Activated T-helper 2 cell treated with anti-CD3 and anti-CD28 coated beads, Interferon-gamma antibody, Interleukin-2, Interleukin-4, amounts not matched to agents 10 μg/mL and 5 μg/mL and 100 μg/mL, durations not matched to agents 14 hours and 24 hours and 36 hours (primary cell): ENCODE measurements at regions of chr5 and their contacts with region 1.

Region 1: DNA sequence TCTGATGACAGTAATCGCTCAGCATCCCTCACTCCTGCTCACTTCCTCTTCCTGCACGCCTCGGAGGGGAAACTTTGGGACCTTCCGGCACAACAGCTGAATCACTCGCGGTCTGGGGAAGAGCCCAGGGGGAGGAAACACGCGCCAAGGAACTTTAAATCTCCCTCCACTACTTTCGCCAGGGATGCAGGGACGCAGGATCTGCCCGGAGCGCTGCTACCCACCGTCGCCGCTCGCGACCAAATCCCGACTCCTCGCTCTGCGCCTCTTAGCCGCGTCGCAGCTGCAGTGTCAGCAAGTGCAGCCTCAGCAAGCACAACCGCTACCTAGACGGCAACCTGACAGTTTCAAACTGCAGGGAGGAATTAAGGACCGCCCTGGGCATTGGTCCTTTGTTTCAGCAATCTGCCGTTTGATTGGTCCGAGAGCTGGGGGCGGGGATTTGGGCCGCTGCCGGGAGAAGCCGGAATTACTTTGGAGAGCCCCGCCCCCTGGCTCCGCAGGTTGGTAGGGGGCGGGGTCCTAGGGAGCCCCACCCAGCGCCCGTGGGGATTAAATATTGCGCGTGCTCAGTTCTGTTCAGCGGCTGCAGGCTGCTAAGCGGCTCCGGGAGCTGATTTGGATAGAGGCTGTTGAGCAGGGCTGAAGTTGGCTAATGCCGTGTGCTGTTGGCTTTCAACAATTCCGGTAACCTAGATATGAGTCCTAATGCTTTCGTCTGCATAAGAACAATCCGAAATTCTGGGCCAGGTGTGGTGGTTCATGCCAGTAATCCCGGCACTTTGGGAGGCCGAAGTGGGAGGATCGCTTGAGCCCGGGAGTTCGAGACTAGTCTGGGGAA is at the start of gene POC5:
- DNase-seq: peak; percentile 97
- H3K4me3 Mint-ChIP-seq: peak within 1 kb of the TSS; percentile 100
- H3K27ac Mint-ChIP-seq: peak within 1 kb of the TSS; percentile 100
- H3K4me1 Mint-ChIP-seq: peaks cover 29% of the 10 kb centered on the region
- H3K27me3 Mint-ChIP-seq: peaks cover 10% of the 10 kb centered on the region
- total RNA-seq, gene POC5: 16.2 and 16.5 TPM in 2 replicates

Region 2: DNA sequence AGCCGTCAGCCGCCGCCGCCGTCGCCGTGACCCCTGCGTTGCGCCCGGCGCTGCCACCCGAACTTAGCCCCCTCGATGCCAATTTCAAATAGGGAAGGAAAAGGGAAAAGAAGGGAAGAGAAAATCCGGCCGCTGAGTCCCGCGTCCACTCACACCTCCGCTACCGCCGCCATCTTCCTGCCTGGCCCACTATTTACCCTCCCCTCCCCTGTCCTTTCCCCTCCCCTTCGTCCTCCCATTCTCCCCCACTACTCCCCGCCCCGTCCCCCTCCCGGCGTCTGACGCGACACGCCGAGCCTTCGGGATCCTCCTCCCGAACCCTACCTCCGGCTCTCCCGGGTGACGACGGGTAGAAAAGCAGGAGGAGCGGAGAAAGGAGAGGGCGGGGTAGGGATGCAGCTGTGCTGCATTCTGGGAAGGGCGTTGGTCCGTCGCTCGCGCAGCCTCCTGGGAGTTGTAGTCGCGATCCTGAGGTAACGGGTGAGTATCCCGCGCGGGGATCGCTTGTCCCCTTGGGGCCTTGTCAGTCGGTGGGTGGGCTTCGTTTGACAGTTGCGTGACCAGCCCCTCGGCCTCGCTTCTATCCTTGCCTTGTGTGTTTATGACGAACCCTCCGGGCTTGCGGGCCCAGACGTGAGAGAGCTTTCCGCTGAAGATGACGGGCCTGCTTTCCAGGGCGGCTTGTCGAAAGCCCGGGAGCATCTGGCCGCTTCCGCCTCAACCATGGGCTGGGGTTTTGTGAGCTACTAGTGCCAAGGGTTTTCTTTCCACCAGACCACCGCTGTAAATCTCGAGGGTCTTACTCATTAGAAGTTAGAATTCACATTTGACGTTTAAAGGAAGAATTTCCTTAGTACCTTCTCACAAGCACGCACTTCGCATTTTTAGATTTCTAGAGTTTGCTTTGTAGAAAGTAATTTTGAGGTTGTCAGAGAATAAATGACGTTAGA is 205.6 kb before region 1 on chr5 and contains the starts of genes CERT1 and POLK:
- intact Hi-C with region 1: loop called (anchors 5 kb)
- DNase-seq: peak; percentile 95
- H3K4me3 Mint-ChIP-seq: peak within 1 kb of the TSS; percentile 100
- H3K27ac Mint-ChIP-seq: peak within 1 kb of the TSS; percentile 90
- H3K4me1 Mint-ChIP-seq: peaks cover 51% of the 10 kb centered on the region
- H3K27me3 Mint-ChIP-seq: no peaks in the 10 kb centered on the region
- total RNA-seq, gene CERT1: 38.6 and 43.7 TPM in 2 replicates
- total RNA-seq, gene POLK: 41.4 and 42.6 TPM in 2 replicates

Region 3: DNA sequence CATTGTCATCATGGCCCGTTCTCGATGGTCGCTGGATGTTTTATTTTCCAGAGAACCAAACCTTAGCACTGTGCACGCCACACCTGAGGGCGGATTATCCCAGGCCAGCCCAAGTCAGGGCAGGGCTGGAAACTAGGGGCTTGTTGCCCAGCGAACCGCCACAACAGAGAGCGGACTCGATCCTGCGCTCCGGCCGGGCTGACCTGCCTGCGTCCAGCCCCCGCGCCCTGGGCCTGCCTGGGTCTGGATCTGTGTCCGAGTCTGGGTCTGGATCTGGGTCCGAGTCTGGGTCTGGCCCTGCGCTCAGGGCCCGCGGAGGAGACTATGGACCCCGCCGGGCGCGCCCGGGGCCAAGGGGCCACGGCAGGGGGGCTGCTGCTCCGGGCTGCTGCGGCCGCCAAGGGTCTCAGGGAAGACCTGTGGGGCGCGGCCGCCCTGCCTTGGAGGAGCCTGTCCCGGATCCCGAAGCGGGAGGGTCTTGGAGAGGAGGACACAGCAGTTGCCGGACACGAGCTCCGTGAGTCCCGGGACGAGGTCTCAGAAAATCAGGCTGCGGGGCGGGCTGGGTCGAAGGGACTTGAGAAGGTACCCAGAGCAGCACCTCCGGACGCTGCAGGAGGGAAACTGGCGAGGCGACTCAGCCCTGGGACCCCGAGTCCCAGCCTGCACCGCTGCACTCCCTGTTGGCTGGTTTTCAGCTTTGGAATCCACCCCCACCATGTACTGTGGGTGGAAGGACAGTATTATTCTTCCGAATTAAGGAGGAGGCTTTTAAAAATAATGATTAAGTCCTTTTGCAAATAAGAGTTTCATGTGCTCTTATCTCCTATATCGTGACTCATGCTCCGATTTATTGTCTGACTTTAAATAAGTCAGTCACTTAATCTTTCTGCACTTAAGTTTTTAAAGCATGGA is 105.7 kb before region 1 on chr5 and contains the start of gene ANKDD1B:
- intact Hi-C with region 1: no loop called
- DNase-seq: no peak
- H3K4me3 Mint-ChIP-seq: no peak within 1 kb of the TSS
- H3K27ac Mint-ChIP-seq: no peak within 1 kb of the TSS
- H3K4me1 Mint-ChIP-seq: peaks cover 7% of the 10 kb centered on the region
- H3K27me3 Mint-ChIP-seq: peaks cover 6% of the 10 kb centered on the region
- total RNA-seq, gene ANKDD1B: 0.18 and 0.48 TPM in 2 replicates